BJ (cell line): ENCODE measurements at regions of chr4 and their contacts with region 1.

Region 1: GRCh38 chr4:152424977-152425376 is 110.9 kb downstream of the FBXW7 start:
- DNase-seq: no peak
- H3K4me3 ChIP-seq: no peak overlapping the region
- H3K27me3 ChIP-seq: no peaks in the 10 kb centered on the region
- CTCF ChIP-seq: no peak

Region 2: GRCh38 chr4:152398060-152398459 is 26.9 kb before region 1 on chr4:
- CTCF ChIA-PET with region 1: no interaction called
- POLR2A ChIA-PET with region 1: interaction called, 14 read pairs
- DNase-seq: no peak
- H3K4me3 ChIP-seq: no peak overlapping the region
- H3K27me3 ChIP-seq: no peaks in the 10 kb centered on the region
- CTCF ChIP-seq: no peak

Region 3: DNA sequence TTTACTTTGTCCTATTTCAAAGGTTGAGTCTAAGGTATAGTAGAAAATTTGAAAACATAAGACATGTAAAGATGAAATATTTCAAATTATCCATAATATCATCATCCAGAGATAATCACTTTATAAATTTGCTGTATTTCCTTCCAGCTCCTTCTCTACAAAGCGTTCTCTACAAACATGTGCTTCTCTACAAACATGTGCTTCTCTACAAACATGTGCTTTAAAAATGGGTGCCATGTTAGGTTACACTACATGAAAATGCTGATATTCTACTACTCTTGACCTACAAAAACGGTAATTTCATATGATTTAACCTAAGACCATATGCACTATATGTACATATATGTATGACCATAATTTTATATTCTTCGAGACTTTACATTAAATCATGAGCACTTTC is 18.9 kb after region 1 on chr4:
- CTCF ChIA-PET with region 1: no interaction called
- POLR2A ChIA-PET with region 1: no interaction called
- DNase-seq: no peak
- H3K4me3 ChIP-seq: no peak overlapping the region
- H3K27me3 ChIP-seq: no peaks in the 10 kb centered on the region
- CTCF ChIP-seq: no peak

Region 4: GRCh38 chr4:153181293-153181692 is 756.3 kb after region 1 on chr4:
- CTCF ChIA-PET with region 1: no interaction called
- POLR2A ChIA-PET with region 1: no interaction called
- DNase-seq: peak; percentile 11
- H3K4me3 ChIP-seq: no peak overlapping the region
- H3K27me3 ChIP-seq: no peaks in the 10 kb centered on the region; the same call in 1 of the 2 replicates
- CTCF ChIP-seq: no peak